Mammary epithelial cell (primary cell): ENCODE measurements at regions of chr6 and their contacts with region 1.

Region 1: GRCh38 chr6:136696238-136696637 is 96.0 kb downstream of the MAP3K5 start:
- DNase-seq: peak; percentile 61
- H3K4me3 ChIP-seq: no peak overlapping the region
- H3K27ac ChIP-seq: no peak overlapping the region
- H3K4me1 ChIP-seq: peaks cover 27% of the 10 kb centered on the region
- H3K27me3 ChIP-seq: no peaks in the 10 kb centered on the region
- CTCF ChIP-seq: no peak

Region 2: DNA sequence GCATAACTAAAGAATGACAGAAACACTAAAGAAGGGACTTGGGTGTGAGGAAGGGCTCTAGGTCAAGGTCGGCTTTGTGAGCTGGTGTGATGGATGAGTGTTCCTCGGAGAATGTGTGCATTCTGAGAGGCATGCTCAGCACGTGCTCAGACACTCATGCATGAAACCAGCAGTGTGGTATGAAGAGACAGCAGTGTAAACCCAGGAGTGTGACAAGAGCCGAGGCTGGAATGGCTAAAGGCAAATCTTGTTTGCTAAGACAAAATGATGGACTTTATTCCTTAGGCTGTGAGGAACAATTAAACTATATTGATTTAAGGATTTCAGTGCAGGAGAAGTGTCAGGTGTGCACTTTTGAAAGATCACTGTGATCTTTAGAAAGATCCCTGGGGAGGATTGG is 38.6 kb before region 1 on chr6:
- CTCF ChIA-PET with region 1: no interaction called
- dilution Hi-C with region 1: no loop called
- in situ Hi-C with region 1: no loop called
- intact Hi-C with region 1: no loop called
- DNase-seq: no peak
- H3K4me3 ChIP-seq: no peak overlapping the region
- H3K27ac ChIP-seq: no peak overlapping the region
- H3K4me1 ChIP-seq: no peaks in the 10 kb centered on the region
- H3K27me3 ChIP-seq: no peaks in the 10 kb centered on the region
- CTCF ChIP-seq: no peak

Region 3: DNA sequence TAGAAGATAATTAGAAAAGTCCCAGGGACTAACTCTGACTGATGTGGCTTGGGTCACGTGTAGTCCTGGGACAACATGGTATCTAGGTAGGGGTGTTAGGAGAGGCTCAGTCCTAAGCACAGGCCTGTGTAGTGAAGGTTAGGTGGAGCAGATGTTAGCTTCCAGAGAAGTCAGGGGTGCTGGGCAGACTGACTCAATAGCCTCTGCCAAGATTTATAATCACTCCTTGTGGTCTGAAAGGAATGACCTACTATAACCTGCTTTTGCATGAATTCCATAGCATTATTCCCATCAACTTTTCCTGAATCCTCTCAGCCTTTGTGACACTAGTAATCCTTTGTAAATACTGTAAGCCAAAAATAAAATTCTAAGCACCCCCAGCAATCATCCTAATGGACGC is 115.9 kb after region 1 on chr6:
- CTCF ChIA-PET with region 1: no interaction called
- dilution Hi-C with region 1: no loop called
- in situ Hi-C with region 1: no loop called
- intact Hi-C with region 1: no loop called
- DNase-seq: no peak
- H3K4me3 ChIP-seq: no peak overlapping the region
- H3K27ac ChIP-seq: no peak overlapping the region
- H3K4me1 ChIP-seq: no peaks in the 10 kb centered on the region
- H3K27me3 ChIP-seq: no peaks in the 10 kb centered on the region
- CTCF ChIP-seq: no peak

Region 4: GRCh38 chr6:138499303-138500018 is 1803.2 kb after region 1 on chr6 and contains the start of gene NHSL1:
- CTCF ChIA-PET with region 1: interaction called, 12 read pairs
- dilution Hi-C with region 1: no loop called
- in situ Hi-C with region 1: no loop called
- intact Hi-C with region 1: no loop called
- DNase-seq: peak; percentile 65
- H3K4me3 ChIP-seq: peak within 1 kb of the TSS; percentile 13 to 26 (median 15)
- H3K27ac ChIP-seq: peak within 1 kb of the TSS; percentile 56
- H3K4me1 ChIP-seq: peaks cover 17% of the 10 kb centered on the region
- H3K27me3 ChIP-seq: no peaks in the 10 kb centered on the region
- CTCF ChIP-seq: no peak
- total RNA-seq, gene NHSL1: 28.3 to 34.7 TPM